CD14-positive monocyte (primary cell): ENCODE measurements at regions of chr2 and their contacts with region 1.

Region 1: DNA sequence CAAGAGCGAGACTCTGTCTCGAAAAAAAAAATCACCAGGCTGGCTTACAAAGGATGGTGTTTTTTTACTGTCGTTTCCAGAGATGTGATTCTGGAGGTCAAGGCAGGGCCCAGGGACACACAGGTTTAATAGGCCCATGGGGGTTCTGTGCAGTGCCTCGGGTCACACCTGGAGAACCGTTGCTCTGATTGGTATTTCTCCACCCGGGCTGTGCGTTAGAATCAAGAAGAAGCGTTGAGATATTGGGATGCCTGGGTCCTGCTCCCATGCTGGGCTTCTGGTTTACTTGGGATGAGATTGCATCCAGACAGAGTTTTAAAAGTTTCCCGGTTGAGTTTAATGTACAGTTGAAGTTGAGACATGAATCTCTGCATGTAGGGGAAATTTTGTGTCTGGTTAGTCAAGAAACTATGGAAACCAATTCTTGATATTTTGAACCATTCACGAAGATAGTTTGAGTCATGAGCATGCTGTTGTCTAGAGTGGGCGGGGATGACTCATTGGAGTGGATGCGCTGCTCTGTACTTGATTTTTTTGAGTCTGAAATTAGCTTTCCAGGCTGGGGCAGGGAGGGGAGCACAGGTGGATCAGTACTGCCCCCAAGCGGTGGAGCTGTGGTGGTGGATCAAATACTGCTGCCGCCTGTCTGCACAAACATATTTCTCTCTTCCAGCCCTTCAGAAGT is 50.1 kb downstream of the GREB1 start:
- DNase-seq: peak; percentile 51 to 80 (median 57)
- H3K4me3 ChIP-seq: no peak overlapping the region
- H3K4me3 Mint-ChIP-seq: no peak overlapping the region
- H3K27ac ChIP-seq: no peak overlapping the region
- H3K27ac Mint-ChIP-seq: peak overlapping the region in 2 of 7 donors; percentile 0 to 12
- H3K4me1 ChIP-seq: no peaks in the 10 kb centered on the region
- H3K4me1 Mint-ChIP-seq: peaks cover 4% of the 10 kb centered on the region
- H3K27me3 ChIP-seq: no peaks in the 10 kb centered on the region
- H3K27me3 Mint-ChIP-seq: peaks cover 4 to 8% (median 7%) of the 10 kb centered on the region in 3 donors
- CTCF ChIP-seq: peak; percentile 79

Region 2: GRCh38 chr2:11129598-11130449 is 454.2 kb before region 1 on chr2:
- intact Hi-C with region 1: loop called (anchors 2 to 5 kb)
- DNase-seq: no peak
- H3K4me3 ChIP-seq: peak overlapping the region in 1 of 3 experiments; percentile 71
- H3K4me3 Mint-ChIP-seq: peak overlapping the region; percentile 59 to 86
- H3K27ac ChIP-seq: no peak overlapping the region
- H3K27ac Mint-ChIP-seq: peak overlapping the region in 3 of 7 donors; percentile 41 to 80 (median 57)
- H3K4me1 ChIP-seq: peaks cover 24 to 27% of the 10 kb centered on the region in 2 donors
- H3K4me1 Mint-ChIP-seq: peaks cover 22% of the 10 kb centered on the region
- H3K27me3 ChIP-seq: peaks cover 0 to 25% of the 10 kb centered on the region in 2 donors
- H3K27me3 Mint-ChIP-seq: peaks cover 23 to 53% (median 32%) of the 10 kb centered on the region in 3 donors
- CTCF ChIP-seq: no peak

Region 3: DNA sequence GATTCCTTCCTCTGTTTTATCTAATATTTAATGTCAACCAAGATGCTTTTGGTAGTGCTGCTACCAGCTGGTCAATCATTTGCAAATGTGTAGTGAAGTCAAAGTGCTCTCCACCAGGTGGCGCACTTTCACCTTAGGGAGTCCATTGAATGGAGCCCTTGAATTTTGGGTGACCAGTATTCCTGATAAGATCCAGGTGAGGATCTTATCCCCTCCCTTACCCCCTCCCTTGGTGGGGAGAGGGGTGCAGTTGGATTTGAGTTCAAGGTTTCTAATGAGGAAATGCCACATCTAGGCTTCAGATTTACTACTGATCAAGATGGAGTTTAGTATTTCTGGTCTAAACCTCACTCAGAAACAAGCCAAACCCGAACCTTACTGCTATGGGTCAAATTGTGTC is 106.0 kb before region 1 on chr2:
- intact Hi-C with region 1: loop called (anchors 1 to 2 kb)
- DNase-seq: peak; percentile 61 to 84 (median 75)
- H3K4me3 ChIP-seq: no peak overlapping the region
- H3K4me3 Mint-ChIP-seq: no peak overlapping the region
- H3K27ac ChIP-seq: no peak overlapping the region
- H3K27ac Mint-ChIP-seq: no peak overlapping the region
- H3K4me1 ChIP-seq: peaks cover 0 to under 1% of the 10 kb centered on the region in 2 donors
- H3K4me1 Mint-ChIP-seq: peaks cover under 1% of the 10 kb centered on the region
- H3K27me3 ChIP-seq: peaks cover 37 to 41% of the 10 kb centered on the region in 2 donors
- H3K27me3 Mint-ChIP-seq: peaks cover 32 to 45% (median 41%) of the 10 kb centered on the region in 3 donors
- CTCF ChIP-seq: peak; percentile 93